Dorsolateral prefrontal cortex (tissue), 120 donors: ENCODE measurements at regions of chr12 and their contacts with region 1.

Region 1: DNA sequence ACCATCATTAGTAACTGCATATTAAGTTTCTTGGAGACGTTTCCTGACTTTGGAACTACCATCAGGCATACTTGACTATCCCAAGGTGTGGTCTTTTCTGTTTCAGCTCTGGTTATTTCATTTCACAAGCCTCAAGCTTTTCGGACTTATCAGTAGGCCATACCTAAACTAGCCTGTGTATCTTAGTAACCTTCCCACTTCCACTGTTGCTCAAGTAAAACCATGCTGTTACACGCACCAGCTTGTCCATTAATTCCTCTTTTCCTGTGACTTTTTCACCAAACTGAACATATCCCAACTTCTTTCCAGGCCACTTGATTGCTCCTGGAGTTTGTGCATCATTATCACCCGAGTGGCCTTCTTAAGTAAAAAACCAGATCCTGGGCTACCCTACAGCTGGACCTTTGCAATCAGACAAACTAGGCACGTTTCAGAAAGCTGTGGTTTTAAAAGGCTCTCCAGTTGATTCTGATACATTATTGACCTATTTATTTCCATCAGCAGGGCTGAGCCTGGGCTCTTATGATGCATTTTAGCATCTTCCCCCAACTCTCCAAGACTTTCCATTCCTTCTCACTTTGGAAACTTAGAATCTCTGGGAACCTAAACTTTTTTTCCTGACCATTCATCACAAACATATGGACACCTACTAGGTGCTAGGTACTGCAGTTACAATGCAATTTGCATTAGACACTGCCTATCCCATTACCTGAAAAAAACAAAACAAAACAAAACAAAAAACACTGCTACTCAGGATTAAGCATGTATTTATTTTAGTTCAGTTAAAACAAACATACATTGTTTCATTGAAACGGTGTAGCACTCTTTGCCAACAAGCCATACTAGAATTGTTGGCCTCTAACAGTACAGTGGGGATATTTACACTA is 14.9 kb downstream of the SLC38A2 start:
- DNase-seq: no peak
- H3K4me3 ChIP-seq: no peak overlapping the region
- H3K27ac ChIP-seq: no peak overlapping the region
- H3K27me3 ChIP-seq: no peaks in the 10 kb centered on the region
- CTCF ChIP-seq: no peak

Region 2: DNA sequence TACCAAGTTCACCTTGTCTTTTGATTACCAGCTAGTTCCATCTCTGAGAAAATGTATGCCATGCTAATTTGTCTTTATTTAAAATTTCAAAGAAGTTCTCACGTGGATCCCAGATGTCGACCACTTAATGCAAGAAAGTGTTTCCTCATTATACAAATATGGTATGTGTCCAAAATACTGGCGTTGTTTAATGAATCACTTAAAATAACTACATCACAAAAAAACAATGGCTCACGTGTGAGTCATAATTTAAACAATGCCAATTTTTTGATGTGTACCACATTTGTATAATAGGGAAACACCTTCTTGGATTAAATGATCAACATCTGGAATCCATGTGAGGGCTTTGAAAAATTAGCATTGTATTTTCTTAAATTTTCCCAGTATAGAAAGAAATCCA is 1347.6 kb before region 1 on chr12:
- intact Hi-C with region 1: no loop called
- DNase-seq: no peak
- H3K4me3 ChIP-seq: no peak overlapping the region
- H3K27ac ChIP-seq: no peak overlapping the region
- H3K27me3 ChIP-seq: peaks cover 0 to 4% (median 0%) of the 10 kb centered on the region in 45 donors
- CTCF ChIP-seq: no peak

Region 3: DNA sequence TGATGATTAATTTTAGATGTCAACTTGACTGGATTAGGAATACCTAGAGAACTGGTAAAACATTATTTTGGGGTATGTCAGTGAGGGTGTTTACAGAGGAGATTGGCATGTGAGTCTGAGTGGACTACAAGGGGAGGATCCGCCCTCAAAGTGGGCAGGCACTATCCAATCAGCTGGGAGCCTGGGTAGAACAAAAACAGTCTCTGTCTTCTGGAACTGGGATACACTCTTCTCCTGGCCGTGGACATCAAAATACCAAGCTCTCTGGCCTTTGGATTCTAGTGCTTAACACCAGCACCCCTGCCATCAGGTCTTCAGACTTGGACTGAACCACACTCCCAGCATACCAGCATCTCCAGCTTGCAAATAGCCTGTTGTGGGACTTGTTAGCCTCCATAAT is 362.9 kb before region 1 on chr12:
- intact Hi-C with region 1: no loop called
- DNase-seq: peak; percentile 5 to 85 (median 76)
- H3K4me3 ChIP-seq: peak overlapping the region in 5 of 59 donors; percentile 2 to 25 (median 6)
- H3K27ac ChIP-seq: peak overlapping the region in 58 of 59 donors; percentile 1 to 99 (median 89)
- H3K27me3 ChIP-seq: no peaks in the 10 kb centered on the region
- CTCF ChIP-seq: peak in 6 of 56 donors; percentile 4 to 33 (median 12)

Region 4: GRCh38 chr12:46268590-46269558 is 88.8 kb before region 1 on chr12 and contains the start of gene SLC38A1:
- intact Hi-C with region 1: loop called in 1 of 2 experiments (anchors 10 kb)
- DNase-seq: peak; percentile 56 to 90 (median 83)
- H3K4me3 ChIP-seq: peak within 1 kb of the TSS; percentile 53 to 89 (median 74)
- H3K27ac ChIP-seq: peak within 1 kb of the TSS in 58 of 59 donors; percentile 47 to 95 (median 84)
- H3K27me3 ChIP-seq: peaks cover 0 to 23% (median 0%) of the 10 kb centered on the region in 45 donors
- CTCF ChIP-seq: peak in 2 of 56 donors; percentile 7 to 27
- total RNA-seq, gene SLC38A1: 59.0 to 128 (median 90.2) TPM